ENCODE measurements at regions of chr1 and their contacts with region 1.

Region 1: DNA sequence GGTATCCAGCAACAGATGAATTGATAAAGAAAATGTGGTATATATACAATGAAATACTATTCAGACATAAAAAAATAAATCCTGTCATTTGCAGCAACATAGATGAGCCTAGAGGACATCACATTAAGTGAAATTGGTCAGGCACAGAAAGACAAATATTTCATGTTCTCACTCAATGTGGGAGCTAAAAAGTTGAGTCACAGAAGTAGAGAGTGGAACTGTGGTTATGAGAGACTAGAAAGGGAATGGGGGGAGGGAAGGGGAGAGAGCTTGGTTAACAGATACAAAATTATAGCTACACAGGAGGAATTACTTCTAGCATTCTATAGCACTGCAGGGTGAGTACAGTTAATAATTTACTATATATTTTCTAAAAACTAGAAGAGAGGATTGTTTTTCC is 37.1 kb upstream of the SERPINC1 start:
- DNase-seq: no peak
- ATAC-seq: no peak

Region 2: DNA sequence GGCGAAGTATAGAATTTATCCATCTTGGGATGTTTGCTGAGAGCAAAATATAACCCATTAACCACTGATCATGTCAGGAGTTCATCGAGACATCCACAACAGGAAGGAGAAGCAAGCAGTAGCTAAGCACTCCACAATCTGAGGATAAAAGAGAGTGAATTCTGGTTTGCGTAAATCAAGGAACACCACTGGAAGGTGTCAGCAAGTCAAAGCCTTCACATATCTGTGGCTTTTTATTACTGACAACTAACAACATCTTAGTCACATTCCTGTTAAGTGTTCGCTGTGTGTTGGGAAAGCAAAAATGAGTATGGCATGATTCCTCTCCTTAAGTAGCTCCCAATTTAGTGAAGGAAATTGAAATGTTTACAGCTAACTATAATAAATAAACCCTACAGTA is 174.2 kb before region 1 on chr1:
- intact Hi-C with region 1: no loop called
- DNase-seq: no peak
- ATAC-seq: no peak

Region 3: DNA sequence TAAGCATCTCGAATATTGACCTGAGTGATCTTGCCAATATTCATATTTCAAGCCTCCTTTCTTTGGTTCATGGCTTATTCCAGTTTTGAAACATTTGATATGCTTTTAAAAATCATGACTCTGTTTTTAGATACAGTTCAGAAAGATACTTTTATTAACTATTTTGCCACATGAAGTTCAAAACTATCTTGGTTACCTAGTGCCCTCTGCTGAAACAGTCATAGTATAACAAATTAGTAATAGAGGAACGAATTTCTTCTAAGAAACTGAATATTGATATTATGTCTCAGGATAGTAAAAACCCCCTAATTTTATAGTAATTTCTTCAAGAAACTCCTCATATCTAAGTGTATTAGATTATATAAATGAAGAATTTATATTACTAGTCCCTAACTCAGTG is 120.6 kb after region 1 on chr1:
- intact Hi-C with region 1: loop called (anchors 10 kb)
- DNase-seq: no peak
- ATAC-seq: no peak

Region 4: GRCh38 chr1:174209347-174210187 is 255.4 kb after region 1 on chr1:
- intact Hi-C with region 1: no loop called
- DNase-seq: no peak
- ATAC-seq: no peak

Measured in Right ventricle myocardium superior (tissue), 1 donor.